Activated naive CD4-positive, alpha-beta T cell treated with anti-CD3 and anti-CD28 coated beads, Interleukin-2, amount 10 ng/mL, durations not matched to agents 7 days and 5 days (primary cell): ENCODE measurements at regions of chr11 and their contacts with region 1.

Region 1: GRCh38 chr11:82718307-82718706 is 15.4 kb downstream of the FAM181B start:
- DNase-seq: peak; percentile 43
- H3K4me3 Mint-ChIP-seq: no peak overlapping the region
- H3K27ac Mint-ChIP-seq: no peak overlapping the region
- H3K4me1 Mint-ChIP-seq: no peaks in the 10 kb centered on the region
- H3K27me3 Mint-ChIP-seq: peaks cover 4% of the 10 kb centered on the region

Region 2: GRCh38 chr11:82701847-82702520 is 16.3 kb before region 1 on chr11:
- CTCF ChIA-PET with region 1: interaction called, 10 read pairs
- DNase-seq: peak; percentile 42
- H3K4me3 Mint-ChIP-seq: no peak overlapping the region
- H3K27ac Mint-ChIP-seq: no peak overlapping the region
- H3K4me1 Mint-ChIP-seq: no peaks in the 10 kb centered on the region
- H3K27me3 Mint-ChIP-seq: peaks cover 8% of the 10 kb centered on the region

Region 3: DNA sequence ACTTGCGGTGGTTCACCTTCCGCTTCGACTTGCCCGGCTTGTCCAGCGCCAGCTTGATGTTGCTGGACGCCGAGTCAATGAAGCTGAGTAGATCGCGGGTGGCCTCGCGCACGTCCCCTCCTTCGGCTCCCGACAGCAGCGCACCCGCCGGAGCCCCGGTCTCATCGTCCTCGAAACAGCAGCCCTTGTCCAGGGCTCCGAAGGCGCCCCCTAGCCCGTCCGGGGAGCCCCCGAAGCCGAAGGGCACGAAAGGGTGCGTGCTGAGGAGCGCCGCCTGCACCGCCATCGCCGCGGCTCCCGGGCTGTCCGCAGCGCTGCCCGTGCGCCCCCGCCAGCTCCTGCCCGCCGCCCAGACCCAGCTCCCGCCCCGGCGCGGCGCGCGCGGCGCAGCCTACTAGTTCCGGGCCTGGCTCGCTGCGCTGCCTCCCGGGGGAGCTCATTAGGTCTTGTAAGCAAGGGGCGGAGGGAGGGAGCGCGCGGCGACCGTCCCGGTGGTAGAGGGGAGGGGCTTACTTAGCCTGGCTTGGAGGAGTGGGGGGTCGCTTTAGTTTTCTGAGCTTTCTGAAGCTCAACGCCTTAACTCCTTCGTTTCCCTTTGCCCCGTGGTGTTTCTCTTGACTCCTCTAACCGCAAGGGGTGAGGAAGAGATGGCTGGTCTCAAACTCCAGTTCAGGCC is 15.3 kb after region 1 on chr11 and contains the start of gene FAM181B:
- CTCF ChIA-PET with region 1: interaction called, 10 read pairs
- DNase-seq: peak; percentile 66
- H3K4me3 Mint-ChIP-seq: peak within 1 kb of the TSS; percentile 66
- H3K27ac Mint-ChIP-seq: no peak within 1 kb of the TSS
- H3K4me1 Mint-ChIP-seq: peaks cover 10% of the 10 kb centered on the region
- H3K27me3 Mint-ChIP-seq: peaks cover 64% of the 10 kb centered on the region

Region 4: DNA sequence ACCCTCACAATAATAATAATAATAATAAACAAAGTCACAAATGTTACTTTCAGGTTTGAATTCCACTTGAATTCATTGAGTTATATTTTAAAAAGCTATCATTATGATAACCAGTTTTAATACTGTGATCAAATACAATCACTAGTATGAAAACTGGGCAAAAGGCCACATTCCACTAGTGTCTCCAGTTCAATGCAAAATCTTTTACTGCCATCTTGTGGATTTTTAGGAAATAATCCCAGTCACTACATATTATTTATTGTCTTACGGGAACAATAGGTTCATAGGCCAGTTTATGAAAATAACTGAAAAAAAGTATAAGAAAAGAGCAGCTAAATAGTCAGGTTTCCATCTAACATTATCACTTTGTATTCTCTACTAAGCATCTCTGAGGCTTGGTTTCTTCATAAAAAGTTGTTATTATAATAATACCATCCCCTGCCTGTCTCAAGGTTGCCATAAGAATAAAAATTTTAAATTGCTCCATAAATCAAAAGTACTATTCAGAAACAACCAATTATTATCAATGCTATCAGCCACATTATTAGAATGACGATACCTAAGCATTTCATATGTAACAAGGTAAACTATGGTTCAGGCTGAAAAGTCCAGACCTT is 1101.7 kb after region 1 on chr11:
- CTCF ChIA-PET with region 1: interaction called, 14 read pairs
- DNase-seq: no peak
- H3K4me3 Mint-ChIP-seq: no peak overlapping the region
- H3K27ac Mint-ChIP-seq: no peak overlapping the region
- H3K4me1 Mint-ChIP-seq: no peaks in the 10 kb centered on the region
- H3K27me3 Mint-ChIP-seq: no peaks in the 10 kb centered on the region